ENCODE measurements at regions of chr6 and their contacts with region 1.

Region 1: GRCh38 chr6:111565326-111566221 is 40.1 kb downstream of the TRAF3IP2 start:
- DNase-seq: peak; percentile 65 to 71
- H3K4me3 ChIP-seq: no peak overlapping the region
- H3K27ac ChIP-seq: peak overlapping the region; percentile 59 to 77 (median 72)
- H3K4me1 ChIP-seq: peaks cover 32 to 45% of the 10 kb centered on the region in 2 donors
- H3K27me3 ChIP-seq: no peaks in the 10 kb centered on the region
- CTCF ChIP-seq: peak in 3 of 6 experiments; percentile 11 to 30 (median 24)
- POLR2A ChIP-seq: peak in 1 of 2 donors; percentile 11

Region 2: GRCh38 chr6:111605100-111605751 is 39.7 kb after region 1 on chr6:
- intact Hi-C with region 1: loop called (anchors 5 kb)
- DNase-seq: peak; percentile 77 to 81
- H3K4me3 ChIP-seq: peak overlapping the region in 2 of 3 donors; percentile 31 to 37
- H3K27ac ChIP-seq: peak overlapping the region; percentile 96 to 98 (median 97)
- H3K4me1 ChIP-seq: peaks cover 41 to 55% of the 10 kb centered on the region in 2 donors
- H3K27me3 ChIP-seq: no peaks in the 10 kb centered on the region
- CTCF ChIP-seq: no peak
- POLR2A ChIP-seq: no peak